Activated B cell treated with CpG ODN at 0.5 μM for 24 hours (primary cell): ENCODE measurements at regions of chr10 and their contacts with region 1.

Region 1: DNA sequence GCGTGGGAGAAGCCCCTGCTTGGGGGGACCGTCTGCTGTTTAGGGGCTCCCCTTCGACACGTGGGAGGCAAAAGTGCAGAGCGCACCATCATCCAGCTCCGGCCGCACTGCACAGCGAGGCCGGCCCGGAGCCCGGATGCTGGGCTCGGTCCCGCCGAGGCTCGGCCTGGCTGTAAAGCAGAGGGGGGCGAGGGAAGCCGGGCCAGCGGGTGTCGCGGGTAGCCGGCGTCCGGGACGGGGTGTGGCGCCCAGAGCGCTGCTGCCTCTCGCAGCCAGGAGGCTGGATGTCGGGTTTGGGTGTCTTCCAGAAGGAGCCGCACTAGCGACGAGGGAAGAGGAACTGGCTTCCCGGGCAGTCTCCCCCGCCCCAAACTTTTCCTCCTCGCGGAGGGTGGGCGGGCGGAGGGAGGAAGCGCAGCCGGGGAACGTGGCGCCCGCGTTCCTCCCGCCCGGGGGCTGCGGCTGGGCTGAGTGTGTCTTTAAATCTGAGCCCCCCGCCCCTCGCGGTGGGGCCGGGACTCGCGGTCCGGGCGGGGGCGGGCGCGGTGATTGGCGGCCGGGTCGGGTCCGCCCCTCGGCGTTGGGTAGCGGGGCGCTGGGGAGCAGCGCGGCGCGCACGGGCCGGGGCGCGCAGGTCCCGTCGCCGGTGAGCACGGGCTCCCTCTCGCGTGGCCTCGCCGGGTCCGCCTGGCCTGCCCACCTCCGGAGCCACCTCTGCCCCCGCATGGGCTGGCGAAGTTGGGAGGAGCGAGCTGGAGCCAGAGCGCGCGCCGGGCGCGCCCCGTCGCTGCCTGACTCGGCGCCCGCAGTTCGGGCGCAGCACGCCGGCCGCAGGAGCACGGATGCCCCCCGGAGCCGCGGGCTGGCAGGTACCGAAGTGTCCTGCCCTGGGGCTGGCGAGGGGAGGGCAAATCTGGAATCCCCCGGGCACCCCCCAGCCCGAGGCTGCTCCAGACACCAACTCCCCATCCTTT is at the start of gene PALD1:
- DNase-seq: peak; percentile 41
- ATAC-seq: peak; percentile 29
- H3K4me3 Mint-ChIP-seq: peak within 1 kb of the TSS; percentile 81
- H3K27ac Mint-ChIP-seq: peak within 1 kb of the TSS; percentile 68
- H3K4me1 Mint-ChIP-seq: peaks cover 51% of the 10 kb centered on the region
- H3K27me3 Mint-ChIP-seq: no peaks in the 10 kb centered on the region
- CTCF ChIP-seq: no peak
- total RNA-seq, gene PALD1: 2.4 and 3.3 TPM in 2 replicates

Region 2: DNA sequence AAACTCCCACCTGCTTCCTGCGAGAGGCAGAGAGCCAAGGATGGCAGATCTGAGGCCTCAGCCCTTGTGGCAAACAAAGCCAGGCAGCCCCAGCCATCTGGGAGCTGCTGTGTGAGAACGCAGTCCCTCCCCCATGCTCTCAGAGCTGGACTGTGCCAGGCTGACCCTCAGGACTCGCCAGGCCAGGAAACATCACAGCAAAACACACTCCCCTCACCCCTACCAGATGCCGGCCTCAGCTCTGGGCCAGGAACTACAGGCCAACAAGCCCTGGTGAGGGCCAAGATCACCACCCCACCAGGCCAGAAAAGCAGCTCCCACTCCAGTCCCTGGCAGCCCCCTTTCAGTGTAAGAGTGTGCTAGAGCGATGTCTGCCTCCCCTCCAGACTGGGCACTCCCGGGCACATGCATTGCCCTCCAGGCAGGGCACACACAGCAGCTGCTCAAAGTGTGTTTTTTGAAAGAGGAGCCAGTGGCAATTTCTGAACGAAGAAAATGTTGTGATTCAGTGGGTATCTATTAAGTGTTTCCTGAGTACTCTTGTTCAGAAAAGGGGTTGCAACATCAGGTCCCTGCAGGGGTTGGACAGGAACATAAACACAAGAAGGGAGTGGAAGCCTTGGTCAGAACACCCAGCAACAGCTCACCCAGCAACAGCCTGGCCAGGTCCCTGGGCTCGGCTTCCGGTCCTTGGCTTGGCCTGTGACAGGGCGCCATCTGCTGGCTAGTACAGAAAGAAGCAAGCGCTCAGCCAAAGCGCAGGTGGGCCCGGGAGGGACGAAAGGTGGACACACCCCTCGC is 114.3 kb before region 1 on chr10:
- CTCF ChIA-PET with region 1: no interaction called
- POLR2A ChIA-PET with region 1: no interaction called
- intact Hi-C with region 1: no loop called
- DNase-seq: peak; percentile 74
- ATAC-seq: peak; percentile 99
- H3K4me3 Mint-ChIP-seq: peak overlapping the region; percentile 24
- H3K27ac Mint-ChIP-seq: no peak overlapping the region
- H3K4me1 Mint-ChIP-seq: peaks cover 15% of the 10 kb centered on the region
- H3K27me3 Mint-ChIP-seq: peaks cover 2% of the 10 kb centered on the region
- CTCF ChIP-seq: peak; percentile 25

Region 3: DNA sequence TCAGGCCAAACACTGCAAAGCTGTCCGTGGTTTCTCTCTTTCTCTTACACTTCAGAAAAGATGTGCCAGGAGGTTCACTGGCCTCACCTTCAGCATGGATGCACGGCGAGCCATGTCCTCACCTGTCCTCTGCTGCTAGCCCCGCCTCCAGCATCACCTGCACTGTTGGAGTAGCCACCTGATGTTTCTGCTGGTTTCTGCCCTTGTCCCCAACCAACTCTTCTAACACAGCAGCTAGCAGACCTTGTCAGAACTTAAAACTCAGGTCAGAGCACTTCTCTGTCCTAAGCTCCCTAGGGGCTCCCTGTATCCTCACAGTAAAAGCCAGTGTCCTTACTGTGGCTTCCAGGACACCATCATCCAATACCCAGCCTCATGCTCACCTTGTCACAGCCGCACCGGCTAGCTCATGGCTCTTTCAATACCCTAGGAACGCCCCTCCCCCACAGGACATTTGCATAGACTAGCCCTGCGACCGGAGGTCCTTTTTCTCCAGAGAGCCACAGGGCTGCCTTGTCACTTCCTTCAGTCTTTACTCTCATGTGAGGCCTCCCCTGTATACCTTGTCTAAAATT is 15.3 kb after region 1 on chr10:
- CTCF ChIA-PET with region 1: no interaction called
- POLR2A ChIA-PET with region 1: interaction called, 19 read pairs
- intact Hi-C with region 1: loop called (anchors 1 kb)
- DNase-seq: peak; percentile 55
- ATAC-seq: peak; percentile 74
- H3K4me3 Mint-ChIP-seq: peak overlapping the region; percentile 71
- H3K27ac Mint-ChIP-seq: peak overlapping the region; percentile 91
- H3K4me1 Mint-ChIP-seq: peaks cover 77% of the 10 kb centered on the region
- H3K27me3 Mint-ChIP-seq: no peaks in the 10 kb centered on the region
- CTCF ChIP-seq: no peak

Region 4: GRCh38 chr10:70508912-70509756 is 30.7 kb after region 1 on chr10:
- CTCF ChIA-PET with region 1: interaction called, 3 read pairs
- POLR2A ChIA-PET with region 1: no interaction called
- intact Hi-C with region 1: loop called (anchors 1 kb)
- DNase-seq: no peak
- ATAC-seq: peak; percentile 61
- H3K4me3 Mint-ChIP-seq: peak overlapping the region; percentile 44
- H3K27ac Mint-ChIP-seq: no peak overlapping the region
- H3K4me1 Mint-ChIP-seq: peaks cover 35% of the 10 kb centered on the region
- H3K27me3 Mint-ChIP-seq: no peaks in the 10 kb centered on the region
- CTCF ChIP-seq: no peak

Region 5: GRCh38 chr10:70540089-70540788 is 61.8 kb after region 1 on chr10:
- CTCF ChIA-PET with region 1: no interaction called
- POLR2A ChIA-PET with region 1: no interaction called
- intact Hi-C with region 1: loop called (anchors 5 kb)
- DNase-seq: peak; percentile 33
- ATAC-seq: peak; percentile 47
- H3K4me3 Mint-ChIP-seq: no peak overlapping the region
- H3K27ac Mint-ChIP-seq: no peak overlapping the region
- H3K4me1 Mint-ChIP-seq: no peaks in the 10 kb centered on the region
- H3K27me3 Mint-ChIP-seq: no peaks in the 10 kb centered on the region
- CTCF ChIP-seq: no peak

Region 6: GRCh38 chr10:70602665-70603448 is 124.4 kb after region 1 on chr10 and contains the start of gene PRF1:
- CTCF ChIA-PET with region 1: no interaction called
- POLR2A ChIA-PET with region 1: no interaction called
- intact Hi-C with region 1: no loop called
- DNase-seq: no peak
- ATAC-seq: no peak
- H3K4me3 Mint-ChIP-seq: no peak within 1 kb of the TSS
- H3K27ac Mint-ChIP-seq: no peak within 1 kb of the TSS
- H3K4me1 Mint-ChIP-seq: no peaks in the 10 kb centered on the region
- H3K27me3 Mint-ChIP-seq: no peaks in the 10 kb centered on the region
- CTCF ChIP-seq: no peak
- total RNA-seq, gene PRF1: 0.53 and 0.61 TPM in 2 replicates